Activated T-helper 1 cell treated with anti-CD3 and anti-CD28 coated beads, Interleukin-12 subunit alpha, Interleukin-12 subunit beta, Interleukin-2, Interleukin-4 antibody, amounts not matched to agents 30 ng/mL and 10 ng/mL and 1 ng/mL, durations not matched to agents 14 hours and 24 hours and 36 hours (primary cell): ENCODE measurements at regions of chr11 and their contacts with region 1.

Region 1: DNA sequence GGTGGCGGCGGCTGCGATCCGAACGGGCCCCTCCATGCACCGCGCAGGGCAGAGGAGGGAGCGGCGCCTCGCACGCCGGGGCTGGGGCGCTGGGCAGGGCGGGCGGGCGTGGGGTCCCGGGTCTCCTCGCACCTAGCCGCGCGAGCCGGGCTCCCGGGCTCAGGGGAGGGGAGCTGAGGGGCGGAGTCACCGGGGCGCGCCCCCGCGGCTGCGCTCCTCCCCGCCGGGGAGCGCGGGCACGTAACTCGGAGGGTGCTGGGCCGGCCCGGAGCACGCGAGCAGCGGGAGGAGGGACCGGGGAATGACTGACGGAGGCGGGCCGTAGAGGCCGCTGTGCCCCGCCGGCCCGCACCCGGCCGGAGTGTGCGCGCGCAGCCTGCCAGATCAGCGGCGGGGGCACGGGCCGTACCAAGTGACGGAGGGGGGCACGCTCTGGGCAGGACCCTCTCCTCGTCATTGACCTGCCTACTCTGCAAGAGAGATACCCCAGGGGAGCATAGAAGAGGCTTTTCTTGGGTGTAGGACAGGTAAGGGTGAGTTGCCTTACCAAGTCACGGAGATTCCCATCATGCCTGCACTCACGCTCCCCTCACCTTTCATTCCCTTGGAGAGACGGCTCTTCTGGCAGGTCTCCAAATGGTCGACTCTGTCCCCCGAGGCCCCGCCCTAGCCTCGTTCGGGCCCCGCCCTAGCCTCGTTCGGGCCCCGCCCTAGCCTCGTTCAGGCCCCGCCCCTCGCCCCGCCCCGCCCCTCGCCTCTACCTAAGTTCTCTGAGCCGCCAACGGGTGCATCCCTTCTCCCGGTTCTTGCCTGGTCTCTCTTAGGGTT is at the start of gene CDON:
- DNase-seq: peak; percentile 90
- H3K4me3 Mint-ChIP-seq: peak within 1 kb of the TSS; percentile 84
- H3K27ac Mint-ChIP-seq: peak within 1 kb of the TSS; percentile 96
- H3K4me1 Mint-ChIP-seq: peaks cover 9% of the 10 kb centered on the region
- H3K27me3 Mint-ChIP-seq: peaks cover 38% of the 10 kb centered on the region
- total RNA-seq, gene CDON: 1.3 and 1.8 TPM in 2 replicates

Region 2: DNA sequence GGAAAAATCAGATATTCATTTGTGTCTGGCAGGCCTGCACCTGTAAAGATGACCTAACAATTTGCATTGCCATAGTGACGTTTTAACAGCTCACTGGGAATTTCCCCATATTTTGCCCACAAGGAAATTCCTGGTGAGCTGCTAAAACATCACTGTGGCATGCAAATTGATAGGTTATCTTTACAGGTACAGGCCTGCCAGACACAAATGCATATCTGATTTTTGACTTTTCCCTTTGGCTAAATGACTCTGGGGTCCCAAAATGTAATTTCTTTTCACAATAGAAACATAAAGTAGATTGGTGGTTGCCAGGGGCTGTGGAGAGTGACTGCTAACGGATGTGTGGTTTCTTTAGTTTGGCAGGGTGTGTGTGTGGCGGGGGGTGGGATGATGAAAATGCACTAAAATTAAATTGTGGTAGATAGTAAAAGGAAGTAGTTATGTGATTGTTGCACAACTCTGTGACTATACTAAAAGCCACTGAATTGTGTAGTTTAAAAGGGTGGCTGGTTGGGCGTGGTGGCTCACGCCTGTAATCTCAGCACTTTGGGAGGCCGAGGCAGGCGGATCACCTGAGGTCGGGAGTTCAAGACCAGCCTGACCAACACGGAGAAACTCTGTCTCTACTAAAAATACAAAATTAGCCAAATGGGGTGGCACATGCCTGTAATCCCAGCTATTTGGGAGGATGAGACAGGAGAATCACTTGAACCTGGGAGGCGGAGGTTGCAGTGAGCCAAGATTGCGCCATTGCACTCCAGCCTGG is 548.4 kb before region 1 on chr11:
- intact Hi-C with region 1: loop called (anchors 10 kb)
- DNase-seq: peak; percentile 55
- H3K4me3 Mint-ChIP-seq: peak overlapping the region; percentile 8
- H3K27ac Mint-ChIP-seq: peak overlapping the region; percentile 83
- H3K4me1 Mint-ChIP-seq: peaks cover 57% of the 10 kb centered on the region
- H3K27me3 Mint-ChIP-seq: no peaks in the 10 kb centered on the region

Region 3: DNA sequence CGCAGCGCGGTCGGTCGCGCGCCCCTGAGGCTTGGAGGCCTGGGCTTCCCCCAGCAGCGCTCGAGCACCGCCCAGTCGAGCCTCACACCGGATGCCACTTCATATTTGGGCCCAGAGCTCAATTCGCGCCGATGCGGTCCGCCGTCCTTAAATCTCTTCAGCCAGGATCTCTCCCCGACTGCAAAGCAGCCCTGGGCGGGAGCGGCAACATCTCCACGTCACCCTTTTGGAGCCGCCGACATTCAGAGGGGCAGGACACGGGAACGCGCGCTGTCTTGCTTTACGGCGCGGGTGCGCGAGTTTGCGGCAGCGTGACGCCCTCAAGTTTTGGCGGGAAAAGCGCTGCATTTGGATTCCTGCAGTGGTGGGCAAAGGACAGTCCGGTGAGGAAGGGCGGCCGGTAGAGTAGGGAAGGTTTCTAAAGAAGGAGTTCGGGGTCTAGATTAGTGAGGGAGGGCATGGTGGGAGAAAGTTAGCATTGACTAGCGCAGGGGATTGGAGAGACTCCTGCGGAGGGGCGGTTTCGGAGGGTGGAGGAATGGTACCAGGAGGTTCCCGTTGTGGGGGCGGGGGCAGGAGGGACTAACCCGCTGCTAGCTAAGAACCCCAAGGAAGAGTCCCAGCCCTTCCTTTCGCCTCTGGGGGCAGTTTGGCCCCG is 437.1 kb before region 1 on chr11:
- intact Hi-C with region 1: loop called (anchors 2 kb)
- DNase-seq: peak; percentile 82
- H3K4me3 Mint-ChIP-seq: peak overlapping the region; percentile 98
- H3K27ac Mint-ChIP-seq: peak overlapping the region; percentile 99
- H3K4me1 Mint-ChIP-seq: peaks cover 38% of the 10 kb centered on the region
- H3K27me3 Mint-ChIP-seq: no peaks in the 10 kb centered on the region

Region 4: DNA sequence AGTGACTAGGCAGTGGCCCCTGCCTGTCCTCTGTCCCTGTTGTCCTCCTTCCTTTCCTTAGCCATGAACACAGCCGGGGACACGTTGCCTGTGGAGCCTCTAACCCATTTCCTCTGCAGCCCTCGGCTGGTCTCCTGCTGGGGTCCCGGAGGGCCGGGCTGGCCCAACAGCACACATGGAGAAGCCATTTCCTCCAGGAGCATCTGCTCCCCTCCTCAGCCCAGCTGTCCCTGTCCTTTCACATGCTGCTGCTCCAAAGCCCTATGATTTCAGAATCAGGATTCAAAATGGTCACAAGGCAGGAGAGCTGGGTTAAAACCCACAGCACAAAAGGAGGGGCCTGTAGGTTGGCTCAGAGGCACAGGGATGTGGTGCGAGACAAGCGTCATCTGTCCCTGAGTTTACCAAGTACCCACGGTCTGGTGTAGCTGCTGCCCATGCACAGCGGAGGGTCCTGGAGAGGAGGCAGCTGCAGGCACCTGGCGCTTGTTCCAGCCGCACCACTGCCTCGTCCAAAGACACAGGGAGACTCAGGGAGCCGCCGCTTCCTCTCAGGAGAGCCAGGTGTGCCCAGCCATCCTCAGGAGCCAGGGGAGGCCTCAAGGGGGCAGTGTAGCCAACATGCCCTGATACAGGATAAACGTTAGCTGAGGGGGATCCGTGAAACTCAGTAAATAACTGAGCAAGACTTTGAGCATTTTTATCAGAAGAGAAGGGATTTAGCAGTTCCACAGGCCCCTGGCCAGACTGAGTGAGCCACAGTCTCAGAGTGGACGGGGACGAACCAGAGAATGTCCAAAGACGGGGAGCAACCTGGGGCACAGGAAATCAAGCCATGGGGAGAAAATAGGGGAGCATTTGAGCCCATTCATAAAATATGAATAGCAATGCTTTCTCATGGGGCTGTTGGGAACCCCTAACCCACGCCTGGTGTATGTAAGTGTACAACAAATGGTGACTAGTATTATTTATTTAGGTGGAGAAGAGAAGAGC is 121.0 kb before region 1 on chr11:
- intact Hi-C with region 1: loop called (anchors 5 kb)
- DNase-seq: peak; percentile 9
- H3K4me3 Mint-ChIP-seq: no peak overlapping the region
- H3K27ac Mint-ChIP-seq: peak overlapping the region; percentile 11
- H3K4me1 Mint-ChIP-seq: no peaks in the 10 kb centered on the region
- H3K27me3 Mint-ChIP-seq: peaks cover under 1% of the 10 kb centered on the region

Region 5: GRCh38 chr11:126211235-126212088 is 148.6 kb after region 1 on chr11 and contains the starts of genes FAM118B and RPUSD4:
- intact Hi-C with region 1: loop called (anchors 1 kb)
- DNase-seq: peak; percentile 98
- H3K4me3 Mint-ChIP-seq: peak within 1 kb of the TSS; percentile 99
- H3K27ac Mint-ChIP-seq: peak within 1 kb of the TSS; percentile 98
- H3K4me1 Mint-ChIP-seq: peaks cover 34% of the 10 kb centered on the region
- H3K27me3 Mint-ChIP-seq: no peaks in the 10 kb centered on the region
- total RNA-seq, gene FAM118B: 13.2 and 16.4 TPM in 2 replicates
- total RNA-seq, gene RPUSD4: 49.2 and 49.8 TPM in 2 replicates

Region 6: DNA sequence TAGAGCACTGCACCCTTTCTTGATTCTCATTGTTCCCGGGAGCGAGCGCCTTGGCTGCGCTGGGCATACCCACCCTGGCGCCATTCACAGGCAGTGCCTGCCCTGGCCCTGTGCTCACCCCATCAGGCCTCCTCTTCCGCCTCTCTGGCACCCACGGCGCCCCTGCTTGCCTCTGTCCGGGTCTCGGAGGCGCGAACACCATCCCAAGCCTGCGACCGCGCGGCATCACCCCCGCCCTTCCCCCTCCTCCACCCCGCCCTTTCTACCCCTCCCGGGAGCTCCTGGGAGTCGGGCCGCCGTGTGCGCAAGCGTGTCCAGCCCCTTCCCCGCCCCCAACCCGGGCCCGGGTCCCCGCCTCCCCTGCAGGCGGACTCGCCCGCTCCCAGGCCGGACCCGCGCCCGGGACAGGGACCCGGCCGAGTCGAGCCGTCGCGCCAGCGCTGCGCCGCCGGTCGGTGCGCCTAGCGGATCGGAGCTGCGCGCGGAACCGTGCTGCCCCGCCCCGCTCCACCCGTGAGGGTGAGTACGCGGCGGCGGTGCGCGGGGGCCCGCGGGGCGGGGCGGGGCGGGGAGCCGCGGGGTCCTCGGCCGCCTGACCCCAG is 292.5 kb after region 1 on chr11 and contains the start of gene ST3GAL4:
- intact Hi-C with region 1: loop called (anchors 2 kb)
- DNase-seq: peak; percentile 64
- H3K4me3 Mint-ChIP-seq: peak within 1 kb of the TSS; percentile 95
- H3K27ac Mint-ChIP-seq: peak within 1 kb of the TSS; percentile 92
- H3K4me1 Mint-ChIP-seq: peaks cover 36% of the 10 kb centered on the region
- H3K27me3 Mint-ChIP-seq: no peaks in the 10 kb centered on the region
- total RNA-seq, gene ST3GAL4: 13.2 and 14.1 TPM in 2 replicates

Region 7: DNA sequence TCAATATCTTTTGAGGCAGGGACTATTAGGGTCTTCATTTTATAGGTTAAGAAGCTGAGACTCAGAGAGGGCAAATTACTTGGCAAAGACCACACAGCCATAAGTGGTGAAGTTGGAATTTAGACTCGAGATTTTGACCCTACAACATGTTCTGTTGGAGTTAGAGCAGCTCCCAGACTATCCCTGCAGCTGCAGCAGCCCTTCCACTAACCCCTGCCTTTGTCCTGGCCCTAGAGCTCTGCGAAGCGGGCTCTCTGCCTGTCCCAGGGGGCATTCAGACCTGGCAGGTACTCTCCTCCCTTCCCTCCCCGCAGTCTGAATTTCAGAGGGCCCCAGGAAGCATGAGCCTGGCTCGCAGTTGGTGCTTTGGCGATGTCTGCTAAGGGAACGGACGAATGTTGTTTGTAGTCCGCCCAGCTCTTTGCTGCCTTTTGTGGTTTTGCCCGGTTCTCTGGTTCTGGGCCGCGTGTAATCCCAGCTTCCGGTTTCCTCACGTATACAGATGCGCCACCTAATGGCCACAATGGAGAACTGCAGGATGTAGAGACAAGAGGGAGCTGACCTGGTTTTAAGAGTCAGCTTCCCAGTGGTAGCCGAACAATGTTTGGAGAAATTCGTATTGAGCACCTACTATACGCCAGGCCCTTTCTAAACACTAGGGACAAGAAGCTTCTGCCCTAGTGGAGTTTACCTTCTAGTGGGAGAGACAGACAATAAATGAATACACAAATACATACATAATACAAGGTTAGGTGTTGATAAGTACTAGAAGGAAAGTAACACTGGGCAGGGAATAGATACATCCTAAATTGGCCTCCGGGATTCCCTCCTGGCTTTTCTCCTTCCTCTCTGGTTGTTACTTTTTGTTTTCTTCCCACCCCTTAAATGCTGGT is 417.8 kb after region 1 on chr11:
- intact Hi-C with region 1: loop called (anchors 5 kb)
- DNase-seq: peak; percentile 66
- H3K4me3 Mint-ChIP-seq: peak overlapping the region; percentile 23
- H3K27ac Mint-ChIP-seq: peak overlapping the region; percentile 87
- H3K4me1 Mint-ChIP-seq: peaks cover 33% of the 10 kb centered on the region
- H3K27me3 Mint-ChIP-seq: peaks cover 3% of the 10 kb centered on the region